ENCODE measurements at regions of chr4 and their contacts with region 1.

Region 1: DNA sequence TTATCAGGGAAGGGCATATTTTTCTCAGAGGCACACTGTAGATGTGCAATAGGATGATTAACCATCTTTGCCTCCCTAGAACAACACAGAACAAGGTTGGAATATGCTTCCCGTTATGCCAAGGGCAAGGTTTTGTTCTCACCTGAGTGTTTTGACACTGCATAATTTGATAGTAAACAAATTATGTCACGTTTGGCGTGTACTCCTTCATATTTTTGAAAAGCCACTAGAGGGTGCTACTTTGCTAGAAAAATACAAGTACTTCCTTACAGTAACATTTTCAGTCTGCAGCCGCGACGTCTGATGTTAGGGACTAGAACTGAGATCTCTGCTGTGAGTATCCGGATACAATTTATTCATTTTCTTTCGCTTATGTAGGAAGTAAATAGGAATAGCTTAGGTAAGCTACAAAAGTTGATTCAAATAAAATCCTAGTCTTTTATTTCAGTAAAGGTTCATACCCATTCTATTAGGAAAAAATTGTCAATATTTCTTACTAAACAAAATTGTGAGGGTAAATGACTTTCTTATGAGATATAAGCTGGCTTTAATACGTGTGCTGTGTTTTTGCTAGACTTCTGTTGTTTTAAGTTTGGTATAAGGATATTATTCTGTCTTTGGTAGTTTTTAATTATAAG is 181.1 kb upstream of the WDFY3 start:
- DNase-seq: peak; percentile 24
- H3K4me3 ChIP-seq: no peak overlapping the region
- H3K27ac ChIP-seq: no peak overlapping the region
- H3K4me1 ChIP-seq: no peaks in the 10 kb centered on the region
- H3K27me3 ChIP-seq: no peaks in the 10 kb centered on the region
- CTCF ChIP-seq: peak; percentile 54 to 63 (median 61)
- EP300 ChIP-seq: no peak
- POLR2A ChIP-seq: no peak

Region 2: DNA sequence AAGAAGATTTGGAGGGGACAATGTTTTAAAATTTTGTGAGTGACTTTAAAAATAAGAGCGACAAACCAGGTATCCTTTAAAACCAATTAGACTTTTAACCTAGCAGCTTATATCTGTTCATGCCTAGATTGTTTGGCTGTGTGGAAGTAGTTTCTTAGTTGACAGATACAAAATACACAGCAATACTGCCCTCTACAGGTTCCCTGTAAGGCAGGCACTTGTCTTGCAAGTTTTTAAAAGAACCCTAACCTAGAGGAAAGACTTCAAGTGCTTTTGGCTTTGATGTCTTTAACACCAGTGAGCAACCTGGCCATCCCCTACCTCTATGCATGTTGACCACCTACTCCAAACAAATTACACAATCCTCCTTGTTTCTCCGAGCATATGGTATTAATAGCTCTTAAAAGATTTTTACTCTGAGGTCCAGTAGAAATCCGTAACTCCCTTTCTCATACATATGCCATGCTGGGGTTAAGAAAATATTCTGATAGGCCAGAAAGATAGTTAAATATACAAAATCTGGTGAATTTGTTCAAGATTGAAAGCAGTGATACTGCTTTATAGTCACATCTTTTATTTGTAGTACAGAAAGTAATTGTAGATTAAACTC is 600.4 kb after region 1 on chr4:
- in situ Hi-C with region 1: loop called (anchors 10 to 25 kb)
- intact Hi-C with region 1: no loop called
- DNase-seq: peak; percentile 15
- H3K4me3 ChIP-seq: no peak overlapping the region
- H3K27ac ChIP-seq: no peak overlapping the region
- H3K4me1 ChIP-seq: peaks cover 0 to 20% (median 0%) of the 10 kb centered on the region in 4 donors
- H3K27me3 ChIP-seq: no peaks in the 10 kb centered on the region
- CTCF ChIP-seq: peak; percentile 77 to 85 (median 80)
- EP300 ChIP-seq: no peak
- POLR2A ChIP-seq: no peak

Region 3: DNA sequence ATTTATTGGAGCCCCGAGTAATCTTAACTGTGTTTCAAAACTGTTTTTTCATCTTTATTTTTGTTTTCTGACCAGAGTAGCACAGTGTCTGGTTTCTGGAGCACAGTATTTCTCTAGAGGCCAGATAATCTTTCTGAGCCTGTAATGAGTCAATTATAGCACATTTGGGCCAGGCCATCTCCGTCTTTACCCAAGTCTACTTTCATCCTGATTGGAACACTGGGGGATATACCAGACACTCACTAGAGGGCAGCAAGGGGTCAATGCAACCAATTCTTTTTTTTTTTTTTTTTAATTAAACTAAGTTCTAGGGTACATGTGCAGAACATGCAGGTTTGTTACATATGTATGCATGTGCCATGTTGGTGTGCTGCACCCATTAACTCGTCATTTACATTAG is 609.4 kb after region 1 on chr4:
- in situ Hi-C with region 1: loop called in 1 of 4 experiments (anchors 25 kb)
- intact Hi-C with region 1: no loop called
- DNase-seq: no peak
- H3K4me3 ChIP-seq: no peak overlapping the region
- H3K27ac ChIP-seq: no peak overlapping the region
- H3K4me1 ChIP-seq: peaks cover 0 to 10% (median 0%) of the 10 kb centered on the region in 4 donors
- H3K27me3 ChIP-seq: no peaks in the 10 kb centered on the region
- CTCF ChIP-seq: peak; percentile 20 to 46 (median 31)
- EP300 ChIP-seq: no peak
- POLR2A ChIP-seq: no peak